ENCODE measurements at regions of chr12 and their contacts with region 1.

Region 1: DNA sequence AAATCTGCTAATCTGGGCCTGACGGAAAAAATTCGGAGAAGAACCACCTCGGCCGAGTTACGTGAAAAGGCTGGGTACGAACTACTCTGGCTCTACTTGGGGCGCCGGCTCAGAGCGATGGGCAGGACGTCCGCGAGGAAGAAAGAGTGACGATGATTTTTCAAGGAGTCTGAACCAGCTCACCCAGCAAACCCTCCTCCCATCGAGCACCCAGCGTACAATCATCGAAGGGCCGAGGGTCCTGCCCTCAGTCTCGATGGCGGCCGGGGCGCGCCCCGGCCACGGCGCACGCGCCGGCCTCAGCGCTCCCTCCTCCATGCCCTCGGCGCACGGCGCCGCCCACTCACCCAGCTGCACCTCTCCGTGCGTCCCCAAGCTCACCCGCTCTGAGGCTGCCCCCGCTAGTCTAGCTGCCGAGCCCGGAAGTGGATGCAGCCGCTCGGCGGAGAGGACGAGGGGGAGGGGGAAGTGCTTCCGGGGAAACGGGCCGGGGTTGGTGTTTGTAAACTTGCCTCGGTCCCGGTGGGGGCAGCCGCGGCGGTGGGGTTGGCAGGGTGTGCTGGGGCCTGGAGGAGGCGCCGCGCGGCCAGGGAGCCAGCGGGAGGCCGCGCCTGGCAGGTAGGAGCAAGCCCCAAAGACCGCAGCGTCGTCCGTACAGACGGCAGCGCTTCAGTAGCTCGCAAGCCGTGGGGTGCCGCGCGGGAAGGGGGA is at the starts of genes CSAD and ZNF740:
- DNase-seq: peak; percentile 94
- H3K4me3 ChIP-seq: peak within 1 kb of the TSS; percentile 71 to 89 (median 83)
- H3K27ac ChIP-seq: peak within 1 kb of the TSS; percentile 50; the same call in 1 of the 2 replicates
- H3K4me1 ChIP-seq: peaks cover 2 to 10% (median 4%) of the 10 kb centered on the region in 4 experiments; a peak in 6 of 7 replicates
- H3K27me3 ChIP-seq: peaks cover 7 to 35% (median 21%) of the 10 kb centered on the region in 4 experiments
- CTCF ChIP-seq: no peak
- EP300 ChIP-seq: peak in 1 of 2 experiments; percentile 56; a peak in 1 of 3 replicates
- POLR2A ChIP-seq: peak in 1 of 2 experiments; percentile 52; a peak in 1 of 3 replicates
- RAD21 ChIP-seq: no peak
- total RNA-seq, gene CSAD: 8.8 and 10.0 TPM in 2 replicates
- total RNA-seq, gene ZNF740: 35.6 and 40.0 TPM in 2 replicates

Region 2: DNA sequence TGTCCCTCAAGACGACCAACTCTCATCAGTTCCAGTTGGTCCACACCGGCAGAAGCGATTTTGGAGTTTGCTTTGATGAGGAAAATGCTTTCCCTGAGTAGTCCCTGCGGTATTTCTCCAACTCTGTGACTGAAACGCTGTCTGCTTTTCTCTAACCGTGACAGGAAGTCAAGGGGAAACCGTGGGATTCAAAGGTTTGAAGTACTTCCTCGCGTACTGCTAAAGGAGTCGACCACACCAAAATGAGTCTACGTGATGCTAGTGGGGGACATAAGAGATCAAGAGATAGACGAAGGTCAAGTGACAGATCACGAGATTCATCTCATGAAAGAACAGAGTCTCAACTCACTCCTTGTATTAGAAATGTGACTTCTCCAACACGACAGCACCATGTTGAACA is 431.8 kb before region 1 on chr12:
- CTCF ChIA-PET with region 1: no interaction called
- POLR2A ChIA-PET with region 1: no interaction called
- DNase-seq: no peak
- H3K4me3 ChIP-seq: no peak overlapping the region
- H3K27ac ChIP-seq: no peak overlapping the region
- H3K4me1 ChIP-seq: no peaks in the 10 kb centered on the region
- H3K27me3 ChIP-seq: peaks cover 0 to 5% (median 0%) of the 10 kb centered on the region in 4 experiments; a peak in 2 of 7 replicates
- CTCF ChIP-seq: no peak
- EP300 ChIP-seq: no peak
- POLR2A ChIP-seq: no peak
- RAD21 ChIP-seq: no peak

Region 3: DNA sequence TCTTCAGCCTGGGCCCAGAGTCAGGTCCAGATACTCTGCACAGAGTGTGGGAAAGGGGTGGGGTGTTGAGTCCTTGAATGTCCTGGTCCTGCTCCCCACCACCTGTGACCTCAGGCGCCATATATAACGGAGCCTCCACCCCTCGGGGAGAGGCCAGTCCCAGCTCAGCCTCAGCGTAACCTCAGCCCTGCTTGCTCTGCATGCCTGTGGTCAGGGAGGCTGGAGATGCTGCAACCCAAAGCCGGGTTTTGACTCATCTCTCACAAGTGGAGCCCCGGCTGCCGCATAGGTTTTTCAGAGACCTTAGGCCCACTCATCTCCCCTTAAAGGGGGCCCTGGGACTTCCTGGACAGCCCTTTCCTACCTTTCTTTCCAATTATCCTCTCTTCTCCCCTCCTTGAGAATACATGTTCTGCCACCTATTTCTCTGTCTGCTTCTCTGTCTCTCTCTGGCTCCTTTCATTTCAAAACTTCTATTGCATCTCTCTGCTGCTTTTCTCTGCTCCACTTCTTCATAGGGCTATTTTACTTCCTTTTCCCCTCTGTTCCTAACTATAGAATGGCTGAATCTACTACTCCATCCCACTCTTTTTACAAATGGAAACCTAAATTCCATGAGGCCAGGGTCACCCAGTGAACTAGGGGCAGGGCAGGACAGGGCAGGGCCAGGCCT is 25.5 kb after region 1 on chr12:
- CTCF ChIA-PET with region 1: interaction called, 164 read pairs
- POLR2A ChIA-PET with region 1: interaction called, 5 read pairs
- DNase-seq: no peak
- H3K4me3 ChIP-seq: no peak overlapping the region
- H3K27ac ChIP-seq: no peak overlapping the region
- H3K4me1 ChIP-seq: peaks cover 0 to 2% (median 0%) of the 10 kb centered on the region in 4 experiments; a peak in 1 of 7 replicates
- H3K27me3 ChIP-seq: no peaks in the 10 kb centered on the region; a peak in 1 of 7 replicates
- CTCF ChIP-seq: no peak
- EP300 ChIP-seq: no peak
- POLR2A ChIP-seq: no peak
- RAD21 ChIP-seq: no peak

Measured in H1 (cell line).